ENCODE measurements at regions of chr15 and their contacts with region 1.

Region 1: GRCh38 chr15:45205192-45205591 is 17.4 kb upstream of the SHF start:
- DNase-seq: peak; percentile 57
- H3K4me3 ChIP-seq: no peak overlapping the region
- H3K27ac ChIP-seq: no peak overlapping the region
- H3K4me1 ChIP-seq: no peaks in the 10 kb centered on the region
- H3K27me3 ChIP-seq: no peaks in the 10 kb centered on the region
- CTCF ChIP-seq: peak; percentile 97 to 99

Region 2: GRCh38 chr15:44971036-44971435 is 234.2 kb before region 1 on chr15:
- CTCF ChIA-PET with region 1: no interaction called
- dilution Hi-C with region 1: no loop called
- in situ Hi-C with region 1: no loop called
- intact Hi-C with region 1: no loop called
- DNase-seq: no peak
- H3K4me3 ChIP-seq: no peak overlapping the region
- H3K27ac ChIP-seq: no peak overlapping the region
- H3K4me1 ChIP-seq: no peaks in the 10 kb centered on the region
- H3K27me3 ChIP-seq: no peaks in the 10 kb centered on the region
- CTCF ChIP-seq: no peak

Region 3: GRCh38 chr15:45166834-45167630 is 38.2 kb before region 1 on chr15:
- CTCF ChIA-PET with region 1: interaction called, 7 read pairs
- dilution Hi-C with region 1: no loop called
- in situ Hi-C with region 1: no loop called
- intact Hi-C with region 1: loop called (anchors 1 kb)
- DNase-seq: peak; percentile 44
- H3K4me3 ChIP-seq: peak overlapping the region; percentile 50 to 58 (median 54)
- H3K27ac ChIP-seq: peak overlapping the region; percentile 35
- H3K4me1 ChIP-seq: peaks cover 22% of the 10 kb centered on the region
- H3K27me3 ChIP-seq: no peaks in the 10 kb centered on the region
- CTCF ChIP-seq: peak; percentile 42 to 65

Region 4: GRCh38 chr15:45268135-45268534 is 62.9 kb after region 1 on chr15:
- CTCF ChIA-PET with region 1: no interaction called
- dilution Hi-C with region 1: no loop called
- in situ Hi-C with region 1: no loop called
- intact Hi-C with region 1: loop called (anchors 1 kb)
- DNase-seq: peak; percentile 52
- H3K4me3 ChIP-seq: no peak overlapping the region
- H3K27ac ChIP-seq: no peak overlapping the region
- H3K4me1 ChIP-seq: no peaks in the 10 kb centered on the region
- H3K27me3 ChIP-seq: no peaks in the 10 kb centered on the region
- CTCF ChIP-seq: peak; percentile 35 to 50

Region 5: DNA sequence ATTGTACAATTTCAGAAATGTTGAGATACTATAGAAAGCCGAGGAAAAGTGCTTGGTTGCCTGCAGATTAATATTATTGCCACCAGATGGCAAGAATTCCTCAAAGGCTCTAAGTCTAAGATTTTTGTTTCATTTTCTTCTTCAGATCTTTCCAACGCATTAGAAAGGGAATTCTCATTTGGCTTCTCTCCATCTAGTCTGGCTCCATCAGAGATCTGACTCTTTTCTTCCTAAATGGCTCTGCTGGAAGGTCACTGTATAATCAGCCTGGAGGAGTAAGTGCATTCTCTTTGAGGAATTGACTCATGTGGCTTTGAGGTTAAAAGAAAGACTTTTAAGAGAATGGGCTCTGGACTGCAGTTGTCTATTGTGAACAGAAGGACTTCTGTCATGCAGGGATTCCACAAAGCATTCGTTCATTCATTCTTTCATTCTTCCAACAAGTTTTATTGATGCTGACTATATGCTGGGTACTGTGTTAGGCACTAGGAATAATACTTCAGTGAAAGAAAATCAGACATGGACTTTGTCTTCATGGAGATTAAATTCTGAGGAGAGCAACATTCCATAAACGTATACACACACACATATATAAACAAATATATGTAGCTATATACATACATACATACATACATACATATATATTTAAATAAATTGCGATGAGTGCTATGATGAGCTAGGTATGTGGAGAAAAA is 102.2 kb after region 1 on chr15:
- CTCF ChIA-PET with region 1: no interaction called
- dilution Hi-C with region 1: no loop called
- in situ Hi-C with region 1: no loop called
- intact Hi-C with region 1: loop called (anchors 1 kb)
- DNase-seq: peak; percentile 40
- H3K4me3 ChIP-seq: peak overlapping the region in 1 of 3 experiments; percentile 19
- H3K27ac ChIP-seq: no peak overlapping the region
- H3K4me1 ChIP-seq: no peaks in the 10 kb centered on the region
- H3K27me3 ChIP-seq: no peaks in the 10 kb centered on the region
- CTCF ChIP-seq: peak; percentile 30 to 53

Region 6: DNA sequence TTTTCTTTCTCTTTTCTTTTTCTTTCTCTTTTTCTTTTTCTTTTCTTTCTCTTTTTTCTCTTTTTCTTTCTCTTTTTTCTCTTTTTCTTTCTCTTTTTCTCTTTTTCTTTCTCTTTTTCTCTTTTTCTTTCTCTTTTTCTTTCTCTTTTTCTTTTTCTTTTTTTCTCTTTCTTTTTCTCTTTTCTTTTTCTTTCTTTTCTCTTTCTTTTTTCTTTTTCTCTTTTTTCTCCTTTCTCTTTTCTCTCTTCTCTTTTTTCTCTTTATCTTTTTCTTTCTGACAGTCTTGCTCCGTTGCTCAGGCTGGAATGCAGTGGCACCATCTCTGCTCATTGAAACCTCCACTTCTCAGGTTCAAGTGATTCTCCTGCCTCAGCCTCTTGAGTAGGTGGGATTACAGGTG is 765.4 kb after region 1 on chr15:
- CTCF ChIA-PET with region 1: no interaction called
- dilution Hi-C with region 1: no loop called
- in situ Hi-C with region 1: no loop called
- intact Hi-C with region 1: no loop called
- DNase-seq: no peak
- H3K4me3 ChIP-seq: no peak overlapping the region
- H3K27ac ChIP-seq: no peak overlapping the region
- H3K4me1 ChIP-seq: no peaks in the 10 kb centered on the region
- H3K27me3 ChIP-seq: peaks cover 2% of the 10 kb centered on the region
- CTCF ChIP-seq: no peak

Measured in mammary epithelial cell (primary cell).